ENCODE measurements at regions of chr17 and their contacts with region 1.

Region 1: GRCh38 chr17:59558977-59559376 is 6.4 kb upstream of the DHX40 start:
- DNase-seq: peak; percentile 7
- ATAC-seq: no peak
- H3K4me3 ChIP-seq: no peak overlapping the region
- H3K27ac ChIP-seq: no peak overlapping the region
- H3K4me1 ChIP-seq: no peaks in the 10 kb centered on the region
- H3K27me3 ChIP-seq: peaks cover 4% of the 10 kb centered on the region
- CTCF ChIP-seq: peak; percentile 42
- POLR2A ChIP-seq: no peak
- RAD21 ChIP-seq: peak; percentile 33; the same call in 1 of the 2 replicates

Region 2: GRCh38 chr17:59521204-59522126 is 37.5 kb before region 1 on chr17:
- CTCF ChIA-PET with region 1: no interaction called
- POLR2A ChIA-PET with region 1: no interaction called
- dilution Hi-C with region 1: no loop called
- in situ Hi-C with region 1: no loop called
- intact Hi-C with region 1: loop called (anchors 5 kb)
- DNase-seq: peak; percentile 59
- ATAC-seq: peak; percentile 99
- H3K4me3 ChIP-seq: no peak overlapping the region
- H3K27ac ChIP-seq: no peak overlapping the region
- H3K4me1 ChIP-seq: 0 out of 2 replicates have a peak, but pooled peaks cover 2% of the 10 kb centered on the region
- H3K27me3 ChIP-seq: peaks cover 5% of the 10 kb centered on the region
- CTCF ChIP-seq: peak; percentile 77
- POLR2A ChIP-seq: no peak
- RAD21 ChIP-seq: peak; percentile 72

Measured in IMR-90 (cell line).